Esophagus squamous epithelium (tissue), 5 donors: ENCODE measurements at regions of chr10 and their contacts with region 1.

Region 1: GRCh38 chr10:69646185-69647060 is 16.4 kb downstream of the FAM241B start:
- DNase-seq: no peak
- H3K4me3 ChIP-seq: no peak overlapping the region
- H3K27ac ChIP-seq: no peak overlapping the region
- H3K4me1 ChIP-seq: peaks cover 0 to 14% (median 10%) of the 10 kb centered on the region in 3 donors
- H3K27me3 ChIP-seq: peaks cover 0 to 10% (median 0%) of the 10 kb centered on the region in 4 donors
- CTCF ChIP-seq: no peak
- POLR2A ChIP-seq: no peak

Region 2: GRCh38 chr10:69716711-69717560 is 70.5 kb after region 1 on chr10:
- intact Hi-C with region 1: loop called (anchors 2 kb)
- DNase-seq: no peak
- H3K4me3 ChIP-seq: no peak overlapping the region
- H3K27ac ChIP-seq: no peak overlapping the region
- H3K4me1 ChIP-seq: no peaks in the 10 kb centered on the region
- H3K27me3 ChIP-seq: peaks cover 0 to 16% (median 0%) of the 10 kb centered on the region in 4 donors
- CTCF ChIP-seq: peak; percentile 16 to 81 (median 67)
- POLR2A ChIP-seq: no peak

Region 3: GRCh38 chr10:69914398-69915214 is 268.2 kb after region 1 on chr10:
- intact Hi-C with region 1: loop called (anchors 10 kb)
- DNase-seq: no peak
- H3K4me3 ChIP-seq: no peak overlapping the region
- H3K27ac ChIP-seq: no peak overlapping the region
- H3K4me1 ChIP-seq: peaks cover 8 to 46% (median 17%) of the 10 kb centered on the region in 3 donors
- H3K27me3 ChIP-seq: peaks cover 0 to 27% (median 0%) of the 10 kb centered on the region in 4 donors
- CTCF ChIP-seq: peak; percentile 67 to 96 (median 92)
- POLR2A ChIP-seq: no peak